WTC11 (cell line): ENCODE measurements at regions of chr2 and their contacts with region 1.

Region 1: GRCh38 chr2:32063310-32064161 is at the start of gene SPAST:
- DNase-seq: peak; percentile 98
- ATAC-seq: peak; percentile 93
- H3K4me3 Mint-ChIP-seq: peak within 1 kb of the TSS; percentile 95
- H3K27ac Mint-ChIP-seq: peak within 1 kb of the TSS; percentile 96
- H3K4me1 Mint-ChIP-seq: peaks cover 20% of the 10 kb centered on the region
- H3K27me3 Mint-ChIP-seq: no peaks in the 10 kb centered on the region
- CTCF ChIP-seq: no peak
- total RNA-seq, gene SPAST: 25.9 to 28.4 TPM (median 26.8 TPM) in 3 replicates

Region 2: DNA sequence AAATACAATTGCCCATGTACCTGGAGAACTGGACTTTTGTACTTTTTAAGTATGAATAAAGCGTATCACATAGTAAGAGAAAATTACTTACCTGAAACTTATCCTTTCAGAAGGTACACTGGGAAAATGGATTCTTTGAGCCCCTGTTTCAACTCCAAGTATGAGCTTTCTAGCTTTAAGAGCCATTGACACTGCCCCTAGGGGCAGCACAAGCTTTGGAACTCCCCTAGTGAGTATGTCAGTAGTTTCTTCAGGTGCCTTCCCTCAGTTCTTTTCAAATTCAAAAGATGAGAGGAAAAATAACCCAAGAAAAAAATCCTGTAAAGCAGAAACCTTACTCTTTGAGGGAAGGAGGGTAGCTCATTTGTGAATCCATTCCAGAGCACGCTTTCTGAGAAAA is 176.8 kb before region 1 on chr2:
- CTCF ChIA-PET with region 1: interaction called, 12 read pairs
- POLR2A ChIA-PET with region 1: no interaction called
- DNase-seq: peak; percentile 41
- ATAC-seq: peak; percentile 99
- H3K4me3 Mint-ChIP-seq: peak overlapping the region; percentile 27
- H3K27ac Mint-ChIP-seq: peak overlapping the region; percentile 67
- H3K4me1 Mint-ChIP-seq: peaks cover 37% of the 10 kb centered on the region
- H3K27me3 Mint-ChIP-seq: no peaks in the 10 kb centered on the region
- CTCF ChIP-seq: no peak

Region 3: DNA sequence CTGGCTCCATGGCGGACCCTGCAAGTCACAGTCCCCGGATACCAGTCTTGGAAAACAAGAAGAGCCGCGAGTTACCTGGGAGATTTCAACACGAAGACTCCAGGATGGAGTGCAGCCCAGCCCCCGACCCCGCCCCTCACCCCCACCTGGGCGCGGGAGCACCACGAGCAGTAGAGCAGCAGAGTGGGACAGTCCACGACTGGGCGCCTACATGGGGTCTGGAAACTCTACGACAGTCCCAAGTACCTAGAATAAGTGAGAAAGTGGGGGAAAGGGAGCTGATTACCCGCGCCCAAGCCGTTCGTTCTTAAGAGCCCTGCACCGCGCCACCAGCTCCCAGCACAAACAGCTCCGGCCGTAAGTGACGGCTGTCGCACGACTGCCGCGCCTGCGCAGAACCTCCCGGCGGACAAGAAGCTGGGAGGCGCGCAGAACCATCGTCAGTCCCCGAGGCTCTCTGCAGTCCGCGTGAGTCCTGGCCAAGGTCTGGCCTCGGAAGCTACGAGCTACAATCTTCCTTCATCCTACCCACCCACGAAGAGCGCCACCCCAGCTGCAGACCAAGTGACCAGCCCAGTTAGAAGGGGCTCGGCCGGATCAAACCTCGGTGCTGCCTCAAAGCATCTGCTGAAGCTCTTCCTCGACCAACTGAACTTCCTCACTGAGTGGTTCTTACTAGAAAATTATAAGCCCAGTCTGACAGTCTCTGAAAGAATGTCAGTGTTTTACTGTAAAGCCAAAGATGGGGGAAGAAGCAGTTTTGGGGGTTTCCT is 23.9 kb before region 1 on chr2 and contains the start of gene DPY30:
- CTCF ChIA-PET with region 1: interaction called, 25 read pairs
- POLR2A ChIA-PET with region 1: interaction called, 56 read pairs
- DNase-seq: peak; percentile 93
- ATAC-seq: peak; percentile 91
- H3K4me3 Mint-ChIP-seq: peak within 1 kb of the TSS; percentile 96
- H3K27ac Mint-ChIP-seq: peak within 1 kb of the TSS; percentile 99
- H3K4me1 Mint-ChIP-seq: peaks cover 11% of the 10 kb centered on the region
- H3K27me3 Mint-ChIP-seq: no peaks in the 10 kb centered on the region; the same call in 1 of the 2 replicates
- CTCF ChIP-seq: no peak
- total RNA-seq, gene DPY30: 116 to 136 TPM (median 135 TPM) in 3 replicates

Region 4: GRCh38 chr2:32166115-32166574 is 102.6 kb after region 1 on chr2:
- CTCF ChIA-PET with region 1: interaction called, 3 read pairs
- POLR2A ChIA-PET with region 1: interaction called, 16 read pairs
- DNase-seq: no peak
- ATAC-seq: no peak
- H3K4me3 Mint-ChIP-seq: peak overlapping the region; percentile 100
- H3K27ac Mint-ChIP-seq: peak overlapping the region; percentile 100
- H3K4me1 Mint-ChIP-seq: peaks cover 15% of the 10 kb centered on the region
- H3K27me3 Mint-ChIP-seq: peaks cover 2% of the 10 kb centered on the region; the same call in 1 of the 2 replicates
- CTCF ChIP-seq: no peak

Region 5: DNA sequence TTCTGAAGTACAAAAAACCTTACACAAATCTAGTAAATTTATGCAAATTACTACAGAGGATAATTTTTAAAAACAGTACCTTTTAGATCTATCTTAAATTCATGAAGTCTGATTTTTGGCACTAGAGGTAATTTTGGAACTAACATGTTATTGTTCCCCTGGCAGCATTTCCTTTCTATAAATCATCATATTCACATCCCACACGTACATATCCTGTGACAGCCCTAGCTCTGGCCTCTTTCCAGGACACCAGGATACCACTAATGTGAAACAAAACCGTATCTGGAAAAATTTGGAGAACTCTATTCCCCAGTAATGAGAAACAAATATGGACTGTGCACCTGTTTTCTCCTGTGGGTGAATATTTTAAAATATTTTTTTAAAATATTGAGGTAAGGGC is 279.3 kb after region 1 on chr2:
- CTCF ChIA-PET with region 1: no interaction called
- POLR2A ChIA-PET with region 1: no interaction called
- DNase-seq: no peak
- ATAC-seq: no peak
- H3K4me3 Mint-ChIP-seq: no peak overlapping the region
- H3K27ac Mint-ChIP-seq: no peak overlapping the region
- H3K4me1 Mint-ChIP-seq: no peaks in the 10 kb centered on the region
- H3K27me3 Mint-ChIP-seq: no peaks in the 10 kb centered on the region; the same call in 1 of the 2 replicates
- CTCF ChIP-seq: no peak